Psoas muscle (tissue), 8 donors: ENCODE measurements at regions of chr16 and their contacts with region 1.

Region 1: GRCh38 chr16:7397901-7398300 is 65.3 kb downstream of the RBFOX1 start:
- DNase-seq: no peak
- ATAC-seq: peak; percentile 34 to 57 (median 46)
- H3K4me3 ChIP-seq: no peak overlapping the region
- H3K27ac ChIP-seq: peak overlapping the region; percentile 58
- H3K4me1 ChIP-seq: peaks cover 76% of the 10 kb centered on the region
- H3K27me3 ChIP-seq: no peaks in the 10 kb centered on the region
- CTCF ChIP-seq: no peak

Region 2: DNA sequence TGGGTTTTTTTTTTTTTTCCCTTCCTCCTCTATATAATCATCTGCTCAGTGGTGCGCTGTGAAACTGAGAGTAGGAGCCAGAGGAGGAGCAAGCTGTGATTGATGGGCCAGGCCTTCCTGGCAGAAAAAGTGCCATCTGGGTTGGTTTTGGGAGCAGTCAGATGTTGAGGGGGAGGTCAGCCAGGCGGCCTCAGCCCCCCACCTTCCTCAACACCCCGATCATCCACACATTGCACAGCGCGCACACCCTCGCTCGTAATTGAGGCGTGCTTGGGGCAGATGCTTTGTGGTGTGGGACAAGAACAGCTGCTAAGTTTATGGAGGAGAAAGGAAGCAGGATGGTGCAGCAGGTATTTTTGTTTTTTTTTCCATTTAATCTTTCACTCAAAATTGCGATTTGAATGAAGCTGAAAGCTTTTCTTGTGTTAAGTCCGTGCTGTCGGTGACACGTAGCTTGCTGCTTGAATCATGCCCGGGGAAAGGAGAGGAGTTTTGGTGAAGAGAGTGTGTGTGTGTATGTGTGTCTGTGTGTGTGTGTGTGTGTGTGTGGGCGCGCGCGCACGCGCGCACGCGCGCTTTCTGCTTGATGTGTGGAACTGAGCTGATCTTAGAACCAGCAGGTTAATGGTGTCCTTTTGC is 112.2 kb after region 1 on chr16:
- intact Hi-C with region 1: loop called in 1 of 2 experiments (anchors 10 kb)
- DNase-seq: no peak
- ATAC-seq: peak in 1 of 4 donors; percentile 13
- H3K4me3 ChIP-seq: no peak overlapping the region
- H3K27ac ChIP-seq: no peak overlapping the region
- H3K4me1 ChIP-seq: peaks cover 61% of the 10 kb centered on the region
- H3K27me3 ChIP-seq: no peaks in the 10 kb centered on the region
- CTCF ChIP-seq: no peak